ENCODE measurements at regions of chr21 and their contacts with region 1.

Region 1: DNA sequence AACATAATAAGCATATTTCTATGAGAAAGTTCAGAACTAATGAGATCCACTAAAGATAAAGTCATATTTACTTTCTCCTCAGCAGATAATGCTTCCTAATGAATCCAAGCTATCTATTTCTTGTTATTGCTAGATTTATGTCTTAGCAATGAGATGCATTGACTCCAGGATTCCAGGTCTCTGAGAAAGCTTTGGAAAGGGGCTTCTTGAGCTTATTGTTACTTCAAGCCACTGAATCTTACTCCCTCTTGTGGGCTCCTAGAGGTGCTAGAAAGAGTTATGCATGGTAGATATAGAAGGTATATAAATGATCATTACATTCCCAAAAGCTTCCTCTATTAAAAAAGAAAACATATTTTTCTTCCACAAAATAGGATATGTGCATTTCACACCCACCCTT is 246.4 kb upstream of the ADAMTS5 start:
- DNase-seq: peak; percentile 9
- ATAC-seq: no peak
- H3K4me3 ChIP-seq: no peak overlapping the region
- H3K27ac ChIP-seq: no peak overlapping the region
- H3K4me1 ChIP-seq: no peaks in the 10 kb centered on the region
- H3K27me3 ChIP-seq: no peaks in the 10 kb centered on the region
- CTCF ChIP-seq: peak; percentile 38

Region 2: DNA sequence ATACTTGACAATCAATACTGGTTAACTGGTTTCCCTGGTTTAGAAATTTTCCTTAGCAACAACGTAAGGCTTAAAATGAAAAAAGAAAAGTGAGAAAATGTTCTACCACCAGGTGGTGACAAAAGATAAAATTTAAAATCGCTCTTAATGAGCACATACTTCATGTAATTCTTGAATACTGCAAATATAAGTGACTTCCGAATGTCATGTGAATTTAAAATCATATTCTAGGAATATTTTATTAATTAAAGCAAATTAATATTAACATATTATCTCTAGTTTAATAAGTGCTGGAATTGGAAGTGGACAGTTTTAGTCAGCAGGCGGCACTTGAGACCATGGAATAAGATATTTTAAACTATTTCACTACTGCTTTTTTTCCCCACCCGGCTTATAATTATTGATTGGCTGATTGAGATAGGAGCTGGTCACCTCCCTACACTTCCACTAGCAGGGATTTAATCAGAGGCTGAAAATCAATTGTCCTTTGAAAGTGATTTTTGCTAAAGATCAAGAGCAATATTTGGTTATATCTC is 363.1 kb before region 1 on chr21:
- CTCF ChIA-PET with region 1: no interaction called
- POLR2A ChIA-PET with region 1: no interaction called
- intact Hi-C with region 1: loop called (anchors 1 kb)
- DNase-seq: peak; percentile 80
- ATAC-seq: no peak
- H3K4me3 ChIP-seq: no peak overlapping the region
- H3K27ac ChIP-seq: no peak overlapping the region
- H3K4me1 ChIP-seq: peaks cover 5% of the 10 kb centered on the region; the same call in 1 of the 2 replicates
- H3K27me3 ChIP-seq: no peaks in the 10 kb centered on the region
- CTCF ChIP-seq: peak; percentile 70

Region 3: GRCh38 chr21:26881504-26882228 is 331.6 kb before region 1 on chr21:
- CTCF ChIA-PET with region 1: interaction called, 3 read pairs
- POLR2A ChIA-PET with region 1: no interaction called
- intact Hi-C with region 1: loop called (anchors 5 kb)
- DNase-seq: peak; percentile 39
- ATAC-seq: no peak; the same call in 1 of the 2 replicates
- H3K4me3 ChIP-seq: no peak overlapping the region
- H3K27ac ChIP-seq: no peak overlapping the region
- H3K4me1 ChIP-seq: no peaks in the 10 kb centered on the region
- H3K27me3 ChIP-seq: no peaks in the 10 kb centered on the region
- CTCF ChIP-seq: peak; percentile 60

Region 4: GRCh38 chr21:27233514-27234115 is 20.3 kb after region 1 on chr21:
- CTCF ChIA-PET with region 1: no interaction called
- POLR2A ChIA-PET with region 1: no interaction called
- intact Hi-C with region 1: no loop called
- DNase-seq: no peak
- ATAC-seq: no peak
- H3K4me3 ChIP-seq: no peak overlapping the region
- H3K27ac ChIP-seq: no peak overlapping the region
- H3K4me1 ChIP-seq: no peaks in the 10 kb centered on the region
- H3K27me3 ChIP-seq: no peaks in the 10 kb centered on the region
- CTCF ChIP-seq: no peak

Region 5: DNA sequence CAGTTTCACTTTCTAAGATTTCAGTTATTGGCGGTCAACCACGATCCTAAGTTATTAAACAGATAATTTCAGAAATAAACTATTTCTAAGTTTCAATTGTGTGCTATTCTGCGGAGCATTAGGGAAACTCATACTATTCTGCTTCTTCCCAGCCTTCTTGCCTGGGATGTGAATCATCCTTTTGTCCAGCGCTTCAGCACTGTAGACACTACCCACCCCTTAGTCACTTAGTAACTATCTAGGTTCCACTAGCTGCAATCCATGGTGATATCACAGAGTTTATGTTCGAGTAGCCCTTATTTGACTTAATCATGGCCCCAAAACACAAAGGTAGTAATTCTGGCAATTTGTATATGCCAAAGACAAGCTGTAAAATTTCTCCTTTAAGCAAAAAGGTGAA is 33.4 kb after region 1 on chr21:
- CTCF ChIA-PET with region 1: no interaction called
- POLR2A ChIA-PET with region 1: no interaction called
- intact Hi-C with region 1: no loop called
- DNase-seq: peak; percentile 3
- ATAC-seq: peak; percentile 78
- H3K4me3 ChIP-seq: no peak overlapping the region
- H3K27ac ChIP-seq: no peak overlapping the region
- H3K4me1 ChIP-seq: no peaks in the 10 kb centered on the region
- H3K27me3 ChIP-seq: no peaks in the 10 kb centered on the region
- CTCF ChIP-seq: no peak

Region 6: DNA sequence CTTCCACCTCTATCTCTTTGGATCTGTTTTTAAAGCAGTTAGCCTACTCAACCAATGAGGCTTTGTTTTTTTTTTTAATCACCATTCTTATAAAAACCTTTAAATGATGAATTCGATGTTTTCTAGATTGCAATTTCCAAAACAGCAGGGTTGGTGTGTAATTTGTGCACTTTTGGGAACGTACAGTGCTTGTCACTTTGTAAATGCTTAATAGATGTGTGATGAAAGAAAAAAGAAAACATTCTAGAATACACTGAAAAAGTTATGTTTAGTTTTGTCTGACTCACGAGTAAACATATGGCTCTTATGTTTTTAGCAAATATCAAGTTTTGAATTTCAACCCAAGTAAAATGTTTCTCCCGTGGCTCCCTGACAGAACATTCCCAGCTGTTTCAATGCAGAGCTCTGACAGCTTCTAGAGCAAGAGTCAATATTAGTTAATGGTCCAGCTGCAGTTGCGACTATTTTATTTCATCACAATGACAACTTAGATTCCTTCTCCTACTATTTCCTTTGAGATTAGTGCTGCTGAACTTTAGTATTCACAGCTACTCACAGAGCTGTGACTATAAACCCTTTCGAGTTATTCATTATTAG is 116.0 kb after region 1 on chr21:
- CTCF ChIA-PET with region 1: no interaction called
- POLR2A ChIA-PET with region 1: no interaction called
- intact Hi-C with region 1: loop called (anchors 10 kb)
- DNase-seq: peak; percentile 18
- ATAC-seq: peak; percentile 48
- H3K4me3 ChIP-seq: no peak overlapping the region
- H3K27ac ChIP-seq: no peak overlapping the region
- H3K4me1 ChIP-seq: no peaks in the 10 kb centered on the region
- H3K27me3 ChIP-seq: no peaks in the 10 kb centered on the region
- CTCF ChIP-seq: no peak

Region 7: GRCh38 chr21:27476696-27477095 is 263.4 kb after region 1 on chr21:
- CTCF ChIA-PET with region 1: no interaction called
- POLR2A ChIA-PET with region 1: no interaction called
- intact Hi-C with region 1: loop called (anchors 2 kb)
- DNase-seq: no peak
- ATAC-seq: no peak
- H3K4me3 ChIP-seq: no peak overlapping the region
- H3K27ac ChIP-seq: no peak overlapping the region
- H3K4me1 ChIP-seq: no peaks in the 10 kb centered on the region
- H3K27me3 ChIP-seq: no peaks in the 10 kb centered on the region
- CTCF ChIP-seq: peak; percentile 34; the same call in 1 of the 2 replicates

Region 8: GRCh38 chr21:27505516-27505915 is 292.2 kb after region 1 on chr21:
- CTCF ChIA-PET with region 1: no interaction called
- POLR2A ChIA-PET with region 1: no interaction called
- intact Hi-C with region 1: no loop called
- DNase-seq: no peak
- ATAC-seq: no peak
- H3K4me3 ChIP-seq: no peak overlapping the region
- H3K27ac ChIP-seq: no peak overlapping the region
- H3K4me1 ChIP-seq: no peaks in the 10 kb centered on the region
- H3K27me3 ChIP-seq: no peaks in the 10 kb centered on the region
- CTCF ChIP-seq: no peak

Measured in PC-3 (cell line).